Esophagus muscularis mucosa (tissue), 4 donors: ENCODE measurements at regions of chr16 and their contacts with region 1.

Region 1: GRCh38 chr16:11851294-11852091 is at the start of gene RSL1D1:
- DNase-seq: peak; percentile 97
- H3K4me3 ChIP-seq: peak within 1 kb of the TSS; percentile 71 to 99 (median 92)
- H3K27ac ChIP-seq: peak within 1 kb of the TSS; percentile 85 to 94 (median 92)
- H3K4me1 ChIP-seq: peaks cover 38 to 63% (median 55%) of the 10 kb centered on the region in 4 donors
- H3K27me3 ChIP-seq: no peaks in the 10 kb centered on the region
- CTCF ChIP-seq: no peak
- EP300 ChIP-seq: no peak
- POLR2A ChIP-seq: peak; percentile 76
- total RNA-seq, gene RSL1D1: 73.9 to 125 (median 97.1) TPM

Region 2: DNA sequence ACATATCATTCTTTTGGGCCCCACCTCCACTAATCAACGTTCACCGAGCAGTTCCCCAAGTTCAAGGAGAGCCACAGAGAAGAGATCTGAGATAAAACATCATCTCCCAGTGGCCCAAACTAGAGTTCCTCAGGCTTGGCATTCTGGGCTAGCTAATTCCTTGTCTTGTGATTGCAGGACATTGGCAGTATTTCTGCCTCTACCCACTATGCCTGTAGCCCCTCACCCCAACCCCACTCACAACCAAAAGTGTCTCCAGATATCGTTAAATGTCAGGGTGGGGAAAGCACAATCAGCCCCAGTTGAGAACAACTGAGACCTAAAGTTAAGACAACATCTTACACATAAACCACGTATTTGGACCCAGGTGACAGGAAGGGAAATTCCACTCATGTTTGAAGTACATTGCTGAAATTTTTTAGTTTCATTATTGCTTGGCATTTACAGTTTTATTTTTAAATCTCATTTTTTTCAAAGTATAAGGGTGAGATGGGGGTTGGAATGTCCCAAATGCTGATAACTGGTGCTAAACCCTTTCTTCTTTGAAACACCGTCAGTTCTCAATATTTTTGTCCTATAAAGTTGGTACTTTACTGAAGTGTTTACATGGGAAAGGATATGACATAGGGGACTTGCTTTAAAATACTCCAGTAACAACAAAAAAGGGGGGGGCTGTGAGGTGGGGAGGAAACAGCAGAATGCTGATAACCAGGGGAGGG is 68.0 kb before region 1 on chr16:
- intact Hi-C with region 1: loop called (anchors 5 kb)
- DNase-seq: no peak
- H3K4me3 ChIP-seq: peak overlapping the region; percentile 10 to 49 (median 19)
- H3K27ac ChIP-seq: peak overlapping the region; percentile 78 to 87 (median 84)
- H3K4me1 ChIP-seq: peaks cover 42 to 79% (median 71%) of the 10 kb centered on the region in 4 donors
- H3K27me3 ChIP-seq: no peaks in the 10 kb centered on the region
- CTCF ChIP-seq: no peak
- EP300 ChIP-seq: no peak
- POLR2A ChIP-seq: no peak

Region 3: DNA sequence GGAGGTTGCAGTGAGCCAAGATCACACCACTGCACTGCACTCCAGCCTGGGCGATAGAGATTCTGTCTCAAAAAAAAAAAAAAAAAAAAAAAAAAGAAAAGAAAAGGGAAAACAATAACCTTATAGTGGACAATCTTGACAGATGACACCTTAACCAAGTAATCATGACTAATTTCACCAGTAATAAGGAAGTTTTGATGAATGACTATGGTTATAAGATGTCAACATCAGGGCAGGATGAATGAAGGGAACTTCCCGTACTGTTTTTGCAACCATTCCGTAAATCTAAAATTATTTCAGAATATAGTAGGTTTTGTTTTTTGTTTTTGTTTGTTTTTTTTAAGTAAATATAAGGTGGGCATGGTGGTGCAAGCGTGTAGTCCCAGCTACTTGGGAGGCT is 41.3 kb after region 1 on chr16:
- intact Hi-C with region 1: no loop called
- DNase-seq: no peak
- H3K4me3 ChIP-seq: no peak overlapping the region
- H3K27ac ChIP-seq: no peak overlapping the region
- H3K4me1 ChIP-seq: peaks cover 0 to 11% (median 3%) of the 10 kb centered on the region in 4 donors
- H3K27me3 ChIP-seq: no peaks in the 10 kb centered on the region
- CTCF ChIP-seq: no peak
- EP300 ChIP-seq: no peak
- POLR2A ChIP-seq: no peak

Region 4: DNA sequence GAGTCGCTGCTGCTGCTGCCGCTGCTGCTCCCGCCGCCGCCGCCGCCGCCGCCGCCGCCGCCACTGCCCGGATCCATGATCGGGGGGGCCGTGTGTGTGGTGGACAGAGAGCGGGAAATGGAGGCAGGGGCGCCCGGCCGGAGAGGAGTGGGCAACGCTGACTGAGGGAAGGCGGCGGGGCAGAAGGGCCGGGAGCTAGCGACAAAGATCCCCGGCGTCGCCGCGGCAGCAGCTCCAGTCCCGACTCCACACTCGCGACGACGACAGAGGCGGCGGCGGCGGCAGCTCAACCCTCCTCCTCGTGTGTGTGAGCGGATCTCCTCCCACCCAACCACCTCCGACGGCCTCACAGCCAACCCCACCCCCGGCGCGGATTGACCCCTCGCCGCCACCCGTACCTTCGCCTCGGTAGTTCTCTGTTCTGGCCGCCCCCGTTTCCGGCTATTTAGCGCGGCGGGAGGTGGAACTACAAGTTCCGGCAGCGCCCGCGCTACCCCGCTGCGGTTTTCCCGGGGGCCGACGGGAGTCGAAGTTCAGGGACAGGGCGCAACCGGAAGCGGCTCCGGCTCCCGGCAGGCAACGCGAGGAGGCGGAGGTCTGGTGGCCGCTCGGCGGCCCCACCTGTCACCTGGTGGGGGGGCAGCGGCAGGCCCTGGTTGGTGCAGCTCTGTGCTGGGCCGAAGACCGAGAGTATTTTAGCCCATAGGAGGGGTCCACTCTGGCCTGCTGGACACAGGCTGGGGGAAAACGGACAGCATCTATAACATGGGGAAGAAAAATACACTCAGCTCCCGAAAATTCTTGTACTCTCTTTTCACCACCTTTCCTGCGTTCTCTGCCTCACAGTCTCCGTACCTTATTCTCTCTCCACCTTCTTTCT is 64.4 kb after region 1 on chr16 and contains the start of gene GSPT1:
- intact Hi-C with region 1: loop called (anchors 2 kb)
- DNase-seq: peak; percentile 100
- H3K4me3 ChIP-seq: peak within 1 kb of the TSS; percentile 96 to 98 (median 97)
- H3K27ac ChIP-seq: peak within 1 kb of the TSS; percentile 95 to 99 (median 96)
- H3K4me1 ChIP-seq: peaks cover 37 to 42% (median 41%) of the 10 kb centered on the region in 4 donors
- H3K27me3 ChIP-seq: no peaks in the 10 kb centered on the region
- CTCF ChIP-seq: peak in 2 of 3 experiments; percentile 23
- EP300 ChIP-seq: no peak
- POLR2A ChIP-seq: peak; percentile 86
- total RNA-seq, gene GSPT1: 55.2 to 71.7 (median 66.5) TPM